AG04449 (cell line): ENCODE measurements at regions of chr18 and their contacts with region 1.

Region 1: GRCh38 chr18:10519999-10520935 is 5.6 kb upstream of the NAPG start:
- DNase-seq: peak; percentile 63
- H3K4me3 ChIP-seq: peak overlapping the region; percentile 24; the same call in 1 of the 2 replicates
- CTCF ChIP-seq: peak; percentile 87

Region 2: GRCh38 chr18:9961041-9961440 is 559.2 kb before region 1 on chr18:
- CTCF ChIA-PET with region 1: interaction called, 10 read pairs
- POLR2A ChIA-PET with region 1: interaction called, 3 read pairs
- DNase-seq: no peak
- H3K4me3 ChIP-seq: no peak overlapping the region
- CTCF ChIP-seq: no peak

Region 3: GRCh38 chr18:9987931-9988330 is 532.3 kb before region 1 on chr18:
- CTCF ChIA-PET with region 1: interaction called, 12 read pairs
- POLR2A ChIA-PET with region 1: no interaction called
- DNase-seq: no peak
- H3K4me3 ChIP-seq: no peak overlapping the region
- CTCF ChIP-seq: no peak

Region 4: DNA sequence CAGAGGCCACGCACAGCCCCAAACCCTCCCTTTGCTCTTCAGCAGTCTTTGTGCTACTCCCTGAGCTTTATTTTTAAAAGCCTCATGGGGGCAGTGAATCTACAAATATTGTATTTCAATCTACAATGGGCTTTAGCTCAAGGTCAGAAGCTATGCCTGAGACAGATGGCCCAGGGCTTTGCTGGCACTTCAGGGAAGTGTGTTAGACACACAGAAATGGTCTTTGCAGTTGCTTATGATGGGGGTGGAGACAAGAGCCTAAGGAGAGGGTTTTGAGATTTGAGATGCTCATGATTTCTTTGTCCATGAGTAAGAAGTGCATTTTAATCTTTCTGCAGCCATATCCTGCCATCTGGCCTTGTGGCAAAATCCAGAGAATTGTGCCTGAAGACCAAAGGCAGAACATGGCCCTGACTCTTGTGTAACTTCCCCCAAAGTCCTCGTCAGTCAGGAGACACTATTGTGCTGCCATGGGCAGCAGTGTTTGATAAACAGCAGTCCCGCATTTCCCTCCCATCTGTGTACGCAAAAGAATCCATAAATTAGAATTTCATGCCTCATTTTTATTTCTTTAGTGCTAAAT is 513.9 kb before region 1 on chr18:
- CTCF ChIA-PET with region 1: interaction called, 81 read pairs
- POLR2A ChIA-PET with region 1: no interaction called
- DNase-seq: no peak
- H3K4me3 ChIP-seq: no peak overlapping the region
- CTCF ChIP-seq: peak; percentile 5

Region 5: DNA sequence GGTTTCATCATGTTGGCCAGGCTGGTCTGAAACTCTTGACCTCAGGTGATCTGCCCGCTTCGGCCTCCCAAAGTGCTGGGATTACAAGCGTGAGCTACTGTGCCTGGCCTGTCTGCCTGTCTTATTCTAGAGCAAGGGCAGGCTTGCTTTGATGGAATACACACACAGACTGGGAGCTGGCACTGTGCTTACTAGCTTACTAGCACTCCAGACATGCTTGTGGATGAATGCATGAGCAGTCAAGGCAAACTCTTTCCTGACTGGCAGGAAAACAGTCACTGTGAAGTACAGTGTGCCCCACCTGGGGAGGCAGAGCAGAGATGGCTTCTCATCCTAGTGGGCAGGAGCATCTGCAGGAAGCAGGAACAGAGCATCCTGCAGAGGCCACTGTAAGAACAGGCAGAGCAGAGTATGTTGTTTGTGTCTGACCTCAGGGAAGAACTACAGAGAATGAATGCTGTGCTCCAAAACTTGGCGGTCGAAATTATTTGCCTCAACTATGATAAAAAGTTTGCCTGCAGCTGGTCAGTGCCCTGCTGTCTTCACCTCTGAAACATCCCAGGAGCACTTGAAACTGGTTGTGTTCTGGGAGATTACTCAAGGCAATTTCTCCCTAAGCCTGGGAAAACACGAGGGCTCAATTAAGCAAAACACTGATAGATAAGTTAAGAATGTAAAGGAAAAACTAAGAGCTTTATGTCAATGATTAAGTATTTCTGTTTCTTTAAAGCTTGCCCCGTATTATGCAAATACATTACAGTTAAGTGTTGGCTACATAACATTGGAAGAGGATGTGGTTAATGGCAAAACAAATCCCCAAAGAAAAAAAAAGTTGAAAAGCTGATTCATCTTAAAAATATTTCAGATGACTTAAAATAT is 504.1 kb before region 1 on chr18:
- CTCF ChIA-PET with region 1: interaction called, 81 read pairs
- POLR2A ChIA-PET with region 1: interaction called, 3 read pairs
- DNase-seq: peak; percentile 98
- H3K4me3 ChIP-seq: no peak overlapping the region
- CTCF ChIP-seq: peak; percentile 70

Region 6: DNA sequence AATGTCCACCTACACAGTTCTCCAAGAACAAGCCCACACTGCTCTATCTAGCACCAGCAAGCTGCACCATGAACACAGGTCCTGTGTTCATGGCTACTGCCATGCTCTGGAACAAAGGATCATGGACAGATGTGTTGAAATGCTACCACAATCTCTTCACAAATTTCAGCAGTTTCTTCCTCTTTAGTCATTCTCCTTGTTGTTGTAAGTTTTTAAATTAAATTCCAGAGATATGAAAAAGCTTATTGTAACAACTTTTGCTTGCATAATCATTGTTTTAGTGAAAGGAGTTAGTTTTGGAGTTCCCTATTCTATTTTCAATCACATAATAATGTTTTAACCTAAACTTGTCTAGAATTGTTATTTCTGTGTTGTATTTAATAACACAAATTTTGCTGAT is 11.7 kb before region 1 on chr18:
- CTCF ChIA-PET with region 1: interaction called, 23 read pairs
- POLR2A ChIA-PET with region 1: no interaction called
- DNase-seq: no peak
- H3K4me3 ChIP-seq: no peak overlapping the region
- CTCF ChIP-seq: no peak

Region 7: GRCh38 chr18:10739152-10739551 is 218.9 kb after region 1 on chr18:
- CTCF ChIA-PET with region 1: no interaction called
- POLR2A ChIA-PET with region 1: no interaction called
- DNase-seq: no peak
- H3K4me3 ChIP-seq: no peak overlapping the region
- CTCF ChIP-seq: no peak